ENCODE measurements at regions of chr9 and their contacts with region 1.

Region 1: GRCh38 chr9:35814841-35815543 is at the start of gene HINT2:
- DNase-seq: peak; percentile 95 to 99 (median 97)
- ATAC-seq: peak; percentile 79
- H3K4me3 ChIP-seq: peak within 1 kb of the TSS; percentile 76 to 96
- H3K4me3 Mint-ChIP-seq: peak within 1 kb of the TSS; percentile 97
- H3K27ac ChIP-seq: peak within 1 kb of the TSS; percentile 74 to 86
- H3K27ac Mint-ChIP-seq: peak within 1 kb of the TSS; percentile 87
- H3K4me1 ChIP-seq: peaks cover 31% of the 10 kb centered on the region
- H3K4me1 Mint-ChIP-seq: peaks cover 36% of the 10 kb centered on the region
- H3K27me3 ChIP-seq: no peaks in the 10 kb centered on the region
- H3K27me3 Mint-ChIP-seq: no peaks in the 10 kb centered on the region
- CTCF ChIP-seq: no peak
- total RNA-seq, gene HINT2: 10.0 to 13.6 TPM

Region 2: GRCh38 chr9:34611829-34612630 is 1203.0 kb before region 1 on chr9 and contains the start of gene RPP25L:
- CTCF ChIA-PET with region 1: no interaction called
- POLR2A ChIA-PET with region 1: no interaction called
- intact Hi-C with region 1: loop called in 1 of 2 experiments (anchors 5 kb)
- DNase-seq: peak; percentile 65 to 92 (median 85)
- ATAC-seq: peak; percentile 95
- H3K4me3 ChIP-seq: peak within 1 kb of the TSS; percentile 88 to 93
- H3K4me3 Mint-ChIP-seq: peak within 1 kb of the TSS; percentile 85
- H3K27ac ChIP-seq: peak within 1 kb of the TSS; percentile 77 to 91
- H3K27ac Mint-ChIP-seq: peak within 1 kb of the TSS; percentile 91
- H3K4me1 ChIP-seq: peaks cover 17% of the 10 kb centered on the region
- H3K4me1 Mint-ChIP-seq: peaks cover 23% of the 10 kb centered on the region
- H3K27me3 ChIP-seq: no peaks in the 10 kb centered on the region
- H3K27me3 Mint-ChIP-seq: no peaks in the 10 kb centered on the region
- CTCF ChIP-seq: no peak
- total RNA-seq, gene RPP25L: 4.4 to 5.1 TPM

Region 3: GRCh38 chr9:35646533-35647265 is 168.3 kb before region 1 on chr9:
- CTCF ChIA-PET with region 1: no interaction called
- POLR2A ChIA-PET with region 1: interaction called, 4 read pairs
- intact Hi-C with region 1: loop called (anchors 1 kb)
- DNase-seq: peak; percentile 85 to 95 (median 90)
- ATAC-seq: peak; percentile 86
- H3K4me3 ChIP-seq: peak overlapping the region; percentile 71 to 82
- H3K4me3 Mint-ChIP-seq: peak overlapping the region; percentile 93
- H3K27ac ChIP-seq: peak overlapping the region; percentile 67 to 89
- H3K27ac Mint-ChIP-seq: peak overlapping the region; percentile 95
- H3K4me1 ChIP-seq: peaks cover 55% of the 10 kb centered on the region
- H3K4me1 Mint-ChIP-seq: peaks cover 61% of the 10 kb centered on the region
- H3K27me3 ChIP-seq: no peaks in the 10 kb centered on the region
- H3K27me3 Mint-ChIP-seq: no peaks in the 10 kb centered on the region
- CTCF ChIP-seq: peak; percentile 77

Region 4: GRCh38 chr9:35748858-35749514 is 66.0 kb before region 1 on chr9 and contains the starts of genes GBA2 and RGP1:
- CTCF ChIA-PET with region 1: no interaction called
- POLR2A ChIA-PET with region 1: interaction called, 4 read pairs
- intact Hi-C with region 1: loop called in 1 of 2 experiments (anchors 2 kb)
- DNase-seq: peak in 8 of 9 experiments; percentile 50 to 80 (median 66)
- ATAC-seq: peak; percentile 66
- H3K4me3 ChIP-seq: peak within 1 kb of the TSS; percentile 80 to 91
- H3K4me3 Mint-ChIP-seq: peak within 1 kb of the TSS; percentile 98
- H3K27ac ChIP-seq: peak within 1 kb of the TSS; percentile 68 to 86
- H3K27ac Mint-ChIP-seq: peak within 1 kb of the TSS; percentile 94
- H3K4me1 ChIP-seq: peaks cover 41% of the 10 kb centered on the region
- H3K4me1 Mint-ChIP-seq: peaks cover 50% of the 10 kb centered on the region
- H3K27me3 ChIP-seq: no peaks in the 10 kb centered on the region
- H3K27me3 Mint-ChIP-seq: no peaks in the 10 kb centered on the region
- CTCF ChIP-seq: no peak
- total RNA-seq, gene GBA2: 14.1 to 14.3 TPM
- total RNA-seq, gene RGP1: 9.6 to 10.4 TPM

Region 5: GRCh38 chr9:35829084-35829763 is 14.2 kb after region 1 on chr9 and contains the start of gene TMEM8B:
- CTCF ChIA-PET with region 1: interaction called, 43 read pairs
- POLR2A ChIA-PET with region 1: interaction called, 11 read pairs
- intact Hi-C with region 1: loop called (anchors 1 kb)
- DNase-seq: peak; percentile 88 to 96 (median 94)
- ATAC-seq: peak; percentile 93
- H3K4me3 ChIP-seq: peak within 1 kb of the TSS; percentile 67 to 89
- H3K4me3 Mint-ChIP-seq: peak within 1 kb of the TSS; percentile 95
- H3K27ac ChIP-seq: peak within 1 kb of the TSS; percentile 64 to 71
- H3K27ac Mint-ChIP-seq: peak within 1 kb of the TSS; percentile 91
- H3K4me1 ChIP-seq: peaks cover 13% of the 10 kb centered on the region
- H3K4me1 Mint-ChIP-seq: peaks cover 41% of the 10 kb centered on the region
- H3K27me3 ChIP-seq: no peaks in the 10 kb centered on the region
- H3K27me3 Mint-ChIP-seq: no peaks in the 10 kb centered on the region
- CTCF ChIP-seq: no peak
- total RNA-seq, gene TMEM8B: 6.4 to 7.2 TPM

Region 6: GRCh38 chr9:36258208-36258988 is 443.4 kb after region 1 on chr9 and contains the start of gene GNE:
- CTCF ChIA-PET with region 1: no interaction called
- POLR2A ChIA-PET with region 1: no interaction called
- intact Hi-C with region 1: loop called in 1 of 2 experiments (anchors 10 kb)
- DNase-seq: peak; percentile 95 to 99 (median 98)
- ATAC-seq: peak; percentile 89
- H3K4me3 ChIP-seq: peak within 1 kb of the TSS; percentile 85 to 100
- H3K4me3 Mint-ChIP-seq: peak within 1 kb of the TSS; percentile 98
- H3K27ac ChIP-seq: peak within 1 kb of the TSS; percentile 90 to 91
- H3K27ac Mint-ChIP-seq: peak within 1 kb of the TSS; percentile 97
- H3K4me1 ChIP-seq: peaks cover 17% of the 10 kb centered on the region
- H3K4me1 Mint-ChIP-seq: peaks cover 16% of the 10 kb centered on the region
- H3K27me3 ChIP-seq: no peaks in the 10 kb centered on the region
- H3K27me3 Mint-ChIP-seq: no peaks in the 10 kb centered on the region
- CTCF ChIP-seq: no peak
- total RNA-seq, gene GNE: 17.3 to 17.4 TPM